Tibial artery (tissue), 4 donors: ENCODE measurements at regions of chr12 and their contacts with region 1.

Region 1: GRCh38 chr12:6533923-6534694 is at the start of gene GAPDH:
- DNase-seq: peak; percentile 86 to 97
- H3K4me3 ChIP-seq: peak within 1 kb of the TSS; percentile 81 to 98
- H3K27ac ChIP-seq: peak within 1 kb of the TSS; percentile 95 to 98
- H3K4me1 ChIP-seq: peaks cover 0 to 51% (median 43%) of the 10 kb centered on the region in 4 donors
- H3K27me3 ChIP-seq: no peaks in the 10 kb centered on the region
- CTCF ChIP-seq: no peak

Region 2: DNA sequence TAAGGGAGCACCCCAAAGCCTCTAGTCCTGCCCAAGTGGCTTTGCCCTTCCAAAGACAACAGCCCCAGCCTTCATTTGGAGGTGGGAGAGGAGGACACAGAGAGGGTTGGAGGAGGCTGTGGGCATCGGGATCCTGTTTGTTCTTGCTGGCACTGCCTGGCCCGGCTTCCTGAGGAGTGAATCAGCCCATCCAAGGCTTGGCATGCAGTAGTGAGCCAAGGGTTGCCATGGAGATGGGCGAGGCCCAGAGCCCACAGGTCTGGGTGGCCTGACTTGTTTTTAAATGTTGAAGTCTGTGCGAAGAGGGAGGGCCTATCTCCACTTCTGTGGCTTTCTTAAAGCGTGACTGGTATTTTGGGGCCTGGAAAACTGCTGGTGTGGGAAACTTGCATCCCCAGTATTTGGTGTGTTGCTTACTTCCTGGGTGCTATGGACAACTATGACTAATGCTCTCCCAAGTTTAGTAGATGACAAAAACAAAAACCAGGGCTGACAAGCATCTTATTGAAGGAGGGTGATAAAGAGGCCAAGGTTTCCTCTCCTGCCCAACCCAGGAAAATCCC is 318.1 kb before region 1 on chr12:
- intact Hi-C with region 1: loop called (anchors 10 kb)
- DNase-seq: peak; percentile 92 to 97
- H3K4me3 ChIP-seq: peak overlapping the region; percentile 21 to 27
- H3K27ac ChIP-seq: peak overlapping the region; percentile 86 to 92
- H3K4me1 ChIP-seq: peaks cover 0 to 100% (median 83%) of the 10 kb centered on the region in 4 donors
- H3K27me3 ChIP-seq: no peaks in the 10 kb centered on the region
- CTCF ChIP-seq: no peak

Region 3: GRCh38 chr12:6341417-6342139 is 192.5 kb before region 1 on chr12 and contains the start of gene TNFRSF1A:
- intact Hi-C with region 1: loop called (anchors 5 kb)
- DNase-seq: peak; percentile 85 to 91
- H3K4me3 ChIP-seq: peak within 1 kb of the TSS; percentile 97 to 99
- H3K27ac ChIP-seq: peak within 1 kb of the TSS; percentile 99
- H3K4me1 ChIP-seq: peaks cover 0 to 78% (median 66%) of the 10 kb centered on the region in 4 donors
- H3K27me3 ChIP-seq: no peaks in the 10 kb centered on the region
- CTCF ChIP-seq: no peak

Region 4: GRCh38 chr12:6363611-6364328 is 170.3 kb before region 1 on chr12:
- intact Hi-C with region 1: no loop called
- DNase-seq: peak in 1 of 2 donors; percentile 70
- H3K4me3 ChIP-seq: peak overlapping the region; percentile 46 to 64
- H3K27ac ChIP-seq: peak overlapping the region; percentile 63 to 72
- H3K4me1 ChIP-seq: peaks cover 0 to 30% (median 15%) of the 10 kb centered on the region in 4 donors
- H3K27me3 ChIP-seq: no peaks in the 10 kb centered on the region
- CTCF ChIP-seq: no peak

Region 5: GRCh38 chr12:6423267-6424007 is 110.7 kb before region 1 on chr12:
- intact Hi-C with region 1: loop called (anchors 2 kb)
- DNase-seq: peak; percentile 89 to 95
- H3K4me3 ChIP-seq: no peak overlapping the region
- H3K27ac ChIP-seq: no peak overlapping the region
- H3K4me1 ChIP-seq: peaks cover 0 to 18% (median 8%) of the 10 kb centered on the region in 4 donors
- H3K27me3 ChIP-seq: no peaks in the 10 kb centered on the region
- CTCF ChIP-seq: peak; percentile 91 to 95

Region 6: DNA sequence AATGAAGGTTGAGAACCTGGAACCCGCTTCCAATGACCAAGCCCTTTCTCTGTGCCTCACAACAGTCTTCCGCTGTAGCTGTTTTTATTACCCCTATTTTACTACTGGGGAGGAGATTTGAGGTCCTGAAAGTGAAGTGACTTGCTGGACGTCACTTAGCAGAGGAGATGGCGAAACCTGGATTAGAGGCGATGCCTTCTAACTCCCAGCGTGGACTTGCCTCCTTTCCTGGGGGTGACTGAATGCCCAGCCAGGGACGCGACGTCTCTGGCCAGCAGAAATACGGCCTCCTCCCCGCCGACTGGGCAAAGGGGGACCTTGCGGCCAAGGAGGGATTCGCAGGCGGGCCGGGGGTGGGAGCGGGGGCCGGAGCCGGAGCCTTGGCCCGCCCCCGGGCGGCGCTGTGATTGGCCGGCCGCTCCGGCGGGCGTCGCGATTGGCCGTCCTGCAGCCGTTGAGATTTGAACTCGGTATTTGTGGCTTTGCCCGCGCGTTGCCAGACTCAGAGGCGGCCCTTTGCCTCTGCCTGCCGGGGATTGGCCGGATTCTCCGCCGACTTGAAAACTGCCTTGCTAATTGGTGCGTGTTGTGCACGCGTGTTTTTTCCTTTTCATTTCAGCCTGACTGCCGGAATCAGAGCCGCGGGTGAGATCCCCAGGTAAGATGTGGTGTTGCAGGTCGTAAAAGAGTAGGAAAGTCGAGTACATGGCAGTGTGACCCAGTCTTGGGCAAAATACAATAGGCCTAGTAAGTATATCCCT is 40.4 kb before region 1 on chr12 and contains the start of gene NCAPD2:
- intact Hi-C with region 1: loop called (anchors 5 kb)
- DNase-seq: peak; percentile 97
- H3K4me3 ChIP-seq: peak within 1 kb of the TSS; percentile 75 to 97
- H3K27ac ChIP-seq: peak within 1 kb of the TSS; percentile 94 to 97
- H3K4me1 ChIP-seq: peaks cover 0 to 27% (median 23%) of the 10 kb centered on the region in 4 donors
- H3K27me3 ChIP-seq: no peaks in the 10 kb centered on the region
- CTCF ChIP-seq: peak; percentile 54 to 65